ENCODE measurements at regions of chr1 and their contacts with region 1.

Region 1: DNA sequence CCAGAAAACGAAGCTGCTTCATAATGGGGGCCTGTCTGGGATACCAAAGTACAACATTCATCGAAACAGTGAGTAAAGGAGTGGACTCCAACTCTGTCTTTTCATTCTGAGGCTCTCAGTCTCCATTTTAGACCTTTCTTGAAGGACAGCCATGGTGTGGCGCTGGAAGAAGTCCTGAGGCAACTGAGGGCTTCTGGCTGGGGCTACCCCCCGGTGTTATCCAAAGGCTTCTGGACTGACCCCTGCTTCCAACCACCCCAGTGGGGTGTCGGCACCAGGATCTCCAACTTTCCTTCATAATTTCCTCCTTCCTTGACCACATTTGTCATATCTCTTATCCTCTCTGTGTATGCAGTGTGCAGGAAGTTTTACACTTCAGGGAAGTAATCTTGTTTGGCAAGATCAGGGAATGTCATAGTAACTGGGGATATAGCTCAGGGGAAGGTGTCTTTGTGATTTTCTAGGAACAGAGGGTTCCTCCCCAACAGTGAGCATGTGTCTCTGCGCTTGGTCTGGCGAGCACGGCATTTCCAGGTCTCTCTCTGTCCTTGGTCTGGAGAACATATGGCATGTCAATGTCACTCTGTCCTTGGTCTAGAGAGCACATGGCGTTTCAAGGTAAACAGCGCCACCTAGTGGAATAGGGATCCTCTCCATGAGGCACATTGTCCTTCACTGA is 19.4 kb upstream of the BSDC1 start:
- DNase-seq: no peak
- H3K4me3 ChIP-seq: no peak overlapping the region
- H3K27me3 ChIP-seq: peaks cover 6% of the 10 kb centered on the region
- CTCF ChIP-seq: peak; percentile 78

Region 2: DNA sequence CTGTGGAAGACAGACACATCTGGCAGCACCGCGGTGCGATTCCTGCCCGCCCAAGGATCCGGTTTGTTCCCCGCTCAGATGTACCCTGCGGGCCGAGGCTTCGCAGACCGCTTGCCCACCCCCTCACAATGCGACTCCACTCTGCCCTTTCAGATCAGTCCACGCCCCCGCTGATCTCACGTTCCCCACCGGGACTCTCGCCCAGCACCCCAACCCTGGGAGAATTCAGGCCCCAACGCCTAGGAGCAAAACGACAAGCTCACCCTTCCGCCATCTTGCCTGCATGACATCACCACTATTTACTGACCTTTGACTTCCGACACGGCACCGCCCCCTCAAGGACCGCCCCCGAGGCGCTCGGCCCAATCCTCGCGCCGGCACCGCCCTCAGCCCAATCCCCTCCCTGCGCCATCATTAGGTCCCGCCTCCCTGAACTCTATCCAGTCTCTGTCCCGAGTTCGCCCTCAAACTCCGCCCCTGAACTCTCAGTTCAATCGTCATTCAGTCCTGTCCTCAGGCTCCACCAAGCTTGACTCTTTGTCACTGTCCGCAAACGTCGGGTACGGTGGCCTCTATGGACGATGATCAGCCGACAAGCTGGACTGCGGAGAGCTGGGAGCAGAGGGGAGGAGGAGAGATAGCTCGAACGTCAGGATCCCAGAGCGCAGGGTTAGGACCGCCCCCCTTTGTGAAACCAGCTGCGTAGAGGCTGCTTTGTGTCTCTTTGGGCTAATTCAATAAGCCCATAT is 19.3 kb before region 1 on chr1 and contains the start of gene BSDC1:
- CTCF ChIA-PET with region 1: interaction called, 120 read pairs
- POLR2A ChIA-PET with region 1: no interaction called
- DNase-seq: peak; percentile 91
- H3K4me3 ChIP-seq: peak within 1 kb of the TSS; percentile 80
- H3K27me3 ChIP-seq: no peaks in the 10 kb centered on the region
- CTCF ChIP-seq: no peak
- polyA plus RNA-seq, gene BSDC1: 53.6 and 74.1 TPM in 2 replicates

Region 3: DNA sequence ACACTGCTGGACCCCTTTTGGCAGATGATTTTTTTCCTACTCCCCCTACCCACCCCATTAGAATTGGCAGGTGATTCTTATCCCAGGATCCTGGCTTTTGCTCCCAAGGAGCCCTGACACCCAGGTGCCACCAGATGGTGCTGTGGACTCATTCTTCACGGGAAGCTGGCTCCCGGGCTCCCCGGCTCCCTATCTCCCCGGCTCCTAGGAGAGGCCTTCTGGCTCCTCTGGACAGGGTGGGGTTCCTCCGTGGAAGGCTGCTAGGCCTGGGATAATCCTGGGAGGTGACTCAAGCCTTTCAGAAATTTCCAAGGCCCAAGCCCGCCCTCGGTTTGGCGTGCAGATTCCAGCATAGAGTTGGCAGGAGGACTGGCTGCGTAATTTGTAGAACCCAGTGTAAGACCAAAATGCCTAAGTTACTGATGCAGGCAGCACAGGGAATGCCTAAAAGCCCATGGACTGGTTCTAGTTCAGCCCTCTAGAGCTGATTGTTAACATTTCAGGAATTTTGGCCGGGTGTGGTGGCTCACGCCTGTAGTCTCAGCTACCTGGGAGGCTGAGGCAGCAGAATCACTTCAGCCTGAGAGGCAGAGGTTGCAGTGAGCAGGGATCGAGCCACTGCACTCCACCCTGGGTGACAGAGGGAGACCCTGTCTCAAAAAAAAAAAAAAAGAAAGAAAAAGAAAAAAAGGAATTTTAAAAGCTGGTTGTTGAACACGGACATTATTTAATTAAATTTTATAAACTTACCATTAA is 12.6 kb before region 1 on chr1:
- CTCF ChIA-PET with region 1: interaction called, 120 read pairs
- POLR2A ChIA-PET with region 1: no interaction called
- DNase-seq: peak; percentile 83
- H3K4me3 ChIP-seq: no peak overlapping the region
- H3K27me3 ChIP-seq: no peaks in the 10 kb centered on the region
- CTCF ChIP-seq: peak; percentile 93

Region 4: DNA sequence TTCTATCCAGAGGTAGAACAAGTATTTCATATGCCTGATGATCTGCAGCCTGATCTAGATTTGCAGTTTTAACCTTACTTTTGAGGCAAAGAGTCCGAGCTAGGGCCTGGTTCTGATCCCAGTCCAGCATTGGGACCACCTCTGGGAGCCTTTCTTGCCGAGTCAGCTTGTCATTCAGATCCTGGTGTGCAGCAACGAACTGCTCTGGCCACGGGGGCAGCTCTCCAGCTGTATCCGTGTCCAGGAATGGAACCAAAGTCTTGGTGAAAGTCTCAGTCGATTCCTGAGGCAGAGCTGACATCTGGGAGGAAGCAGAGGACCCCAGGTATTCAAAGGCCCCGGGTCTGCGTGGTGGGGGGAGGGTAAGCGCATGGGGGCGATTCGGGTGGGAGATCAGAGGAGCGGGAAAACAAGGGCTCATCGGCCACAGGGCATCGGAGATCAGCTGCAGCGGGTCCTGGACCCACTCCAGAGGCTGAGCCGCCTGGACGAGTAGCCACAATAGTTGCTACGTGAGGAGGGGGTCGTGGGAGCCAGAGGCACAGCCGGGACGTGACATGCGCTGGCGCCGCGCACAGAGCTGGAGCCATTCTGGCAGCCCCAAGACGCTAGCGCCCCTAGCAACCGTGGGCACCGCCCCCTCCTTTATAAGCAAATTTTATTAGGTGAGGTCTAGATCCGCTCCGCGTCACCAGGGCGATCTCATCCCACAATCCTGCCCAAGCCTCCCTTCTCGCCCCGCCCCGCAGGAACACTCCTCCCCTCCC is 13.0 kb after region 1 on chr1:
- CTCF ChIA-PET with region 1: interaction called, 34 read pairs
- POLR2A ChIA-PET with region 1: no interaction called
- DNase-seq: no peak
- H3K4me3 ChIP-seq: peak overlapping the region; percentile 25
- H3K27me3 ChIP-seq: peaks cover 28% of the 10 kb centered on the region
- CTCF ChIP-seq: no peak

Measured in BJ (cell line).